Posterior cingulate gyrus (tissue), 11 donors: ENCODE measurements at regions of chr6 and their contacts with region 1.

Region 1: DNA sequence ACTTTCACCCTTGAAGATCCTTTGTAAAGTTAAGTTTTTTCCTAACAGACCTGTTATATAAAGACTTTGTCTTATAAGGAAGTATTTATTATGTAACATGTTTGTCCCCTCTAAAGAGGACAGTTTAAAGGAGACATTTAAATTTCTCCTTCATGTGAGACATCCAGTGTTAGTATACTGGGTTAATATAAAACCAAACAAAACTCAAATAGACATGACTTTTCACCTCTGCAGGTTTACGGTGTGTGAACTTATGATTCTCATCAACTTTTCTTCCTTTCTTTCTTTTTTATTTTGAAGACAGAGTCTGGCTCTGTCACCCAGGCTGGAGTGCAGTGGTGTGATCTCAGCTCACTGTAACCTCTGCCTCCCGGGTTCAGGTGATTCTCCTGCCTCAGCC is 17.4 kb upstream of the MPC1 start:
- DNase-seq: no peak

Region 2: DNA sequence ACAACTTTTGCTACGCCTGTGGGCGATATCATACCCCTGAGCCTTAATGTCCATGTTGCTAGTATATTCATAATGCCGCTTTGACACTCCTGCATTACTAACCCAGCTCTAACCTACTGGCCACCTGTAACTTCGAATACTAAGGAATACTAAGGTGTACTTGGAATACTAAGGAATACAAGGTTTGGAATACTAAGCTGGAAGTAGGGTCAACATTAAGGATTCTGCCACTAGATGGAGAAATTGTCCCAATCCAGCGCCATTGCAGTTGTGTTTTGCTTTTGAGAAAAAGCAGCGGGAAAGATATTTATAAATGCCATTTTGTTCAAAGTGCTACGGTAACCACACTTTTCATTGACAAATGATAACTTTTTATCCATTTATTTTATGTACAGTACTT is 243.2 kb before region 1 on chr6:
- intact Hi-C with region 1: loop called (anchors 2 kb)
- DNase-seq: no peak

Region 3: GRCh38 chr6:166308033-166308768 is 92.0 kb before region 1 on chr6 and contains the start of gene PRR18:
- intact Hi-C with region 1: loop called (anchors 2 kb)
- DNase-seq: peak; percentile 68 to 97 (median 78)

Region 4: GRCh38 chr6:166342349-166343149 is 57.6 kb before region 1 on chr6 and contains the start of gene SFT2D1:
- intact Hi-C with region 1: no loop called
- DNase-seq: peak; percentile 78 to 97 (median 84)